ENCODE measurements at regions of chr16 and their contacts with region 1.

Region 1: DNA sequence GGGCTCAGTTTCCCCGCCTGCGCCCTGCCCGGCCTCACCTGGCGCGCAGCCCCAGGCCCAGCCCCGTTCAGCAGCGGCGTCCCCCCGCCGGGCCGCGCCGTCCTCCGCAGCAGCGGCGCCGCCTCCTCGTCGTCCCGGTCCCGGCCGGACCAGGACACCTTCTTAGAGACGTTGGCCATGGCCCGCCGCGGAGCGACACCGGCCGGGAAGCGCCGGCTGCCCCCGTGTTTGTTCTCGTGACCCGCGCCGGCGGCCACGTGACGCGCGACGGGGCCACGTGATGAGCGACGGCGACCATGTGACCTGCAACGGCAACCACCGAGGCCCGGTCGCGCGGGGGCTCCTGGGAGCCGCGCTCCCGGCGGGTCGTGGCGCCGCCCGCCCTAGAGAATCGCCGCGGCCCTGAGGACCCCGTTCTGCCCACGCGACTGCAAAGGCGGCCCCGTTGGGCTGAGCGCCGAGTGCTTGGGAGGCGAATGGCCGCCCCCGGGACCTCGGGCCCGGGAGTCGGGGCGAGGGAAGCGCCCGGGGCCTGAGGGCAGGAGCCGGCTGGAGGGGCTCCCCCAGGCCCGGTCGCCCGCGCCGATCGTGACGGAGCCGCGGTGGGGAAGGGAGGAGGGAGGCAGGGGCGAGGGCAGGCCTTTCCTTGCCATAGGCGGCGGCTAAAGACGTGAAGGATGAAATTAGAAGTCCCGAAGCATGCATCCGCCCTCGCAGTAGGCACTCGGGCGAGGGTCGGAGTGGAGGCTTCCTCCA is at the start of gene CLCN7:
- DNase-seq: peak; percentile 75 to 89 (median 84)
- H3K4me3 ChIP-seq: peak within 1 kb of the TSS; percentile 61 to 81 (median 77)
- H3K4me3 Mint-ChIP-seq: peak within 1 kb of the TSS; percentile 82 to 93
- H3K27ac ChIP-seq: peak within 1 kb of the TSS; percentile 79 to 99
- H3K27ac Mint-ChIP-seq: peak within 1 kb of the TSS; percentile 87 to 95 (median 91)
- H3K4me1 ChIP-seq: peaks cover 54 to 62% of the 10 kb centered on the region in 2 donors
- H3K4me1 Mint-ChIP-seq: peaks cover 47% of the 10 kb centered on the region
- H3K27me3 ChIP-seq: no peaks in the 10 kb centered on the region
- H3K27me3 Mint-ChIP-seq: peaks cover 0 to 5% (median 0%) of the 10 kb centered on the region in 3 donors
- CTCF ChIP-seq: no peak
- polyA plus RNA-seq, gene CLCN7: 37.4 to 249 (median 56.5) TPM

Region 2: DNA sequence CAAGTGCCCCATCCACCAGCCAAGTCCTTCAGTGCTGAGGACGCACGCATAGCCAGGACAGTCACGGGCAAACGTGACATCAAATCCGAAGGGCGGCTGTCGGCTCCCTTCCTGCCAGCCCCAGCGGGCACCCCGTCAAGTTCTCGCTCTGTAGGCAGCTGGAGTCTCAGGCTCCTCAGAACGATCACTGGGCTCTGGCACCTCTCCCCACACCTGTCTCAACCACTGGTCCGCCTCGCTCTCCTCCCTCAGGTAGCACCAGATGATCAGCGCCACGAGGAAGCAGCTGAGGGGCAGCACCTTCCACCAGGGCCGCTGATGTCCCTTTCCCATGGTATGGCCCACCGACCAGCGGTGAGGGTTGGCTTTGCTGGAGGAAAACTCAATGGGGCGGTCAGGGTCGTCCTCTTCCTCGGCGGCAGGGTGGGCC is 54.8 kb before region 1 on chr16:
- intact Hi-C with region 1: loop called in 1 of 2 experiments (anchors 1 kb)
- DNase-seq: no peak
- H3K4me3 ChIP-seq: peak overlapping the region; percentile 64 to 96 (median 69)
- H3K4me3 Mint-ChIP-seq: peak overlapping the region; percentile 86 to 93
- H3K27ac ChIP-seq: peak overlapping the region; percentile 72 to 87
- H3K27ac Mint-ChIP-seq: peak overlapping the region; percentile 72 to 96 (median 94)
- H3K4me1 ChIP-seq: peaks cover 18 to 21% of the 10 kb centered on the region in 2 donors
- H3K4me1 Mint-ChIP-seq: peaks cover 20% of the 10 kb centered on the region
- H3K27me3 ChIP-seq: no peaks in the 10 kb centered on the region
- H3K27me3 Mint-ChIP-seq: no peaks in the 10 kb centered on the region
- CTCF ChIP-seq: no peak

Region 3: GRCh38 chr16:1492923-1493745 is 18.2 kb after region 1 on chr16 and contains the start of gene TELO2:
- intact Hi-C with region 1: loop called in 1 of 2 experiments (anchors 2 kb)
- DNase-seq: peak; percentile 73 to 82 (median 81)
- H3K4me3 ChIP-seq: peak within 1 kb of the TSS; percentile 81 to 90 (median 87)
- H3K4me3 Mint-ChIP-seq: peak within 1 kb of the TSS; percentile 92 to 94
- H3K27ac ChIP-seq: peak within 1 kb of the TSS; percentile 78 to 96
- H3K27ac Mint-ChIP-seq: peak within 1 kb of the TSS; percentile 94 to 99 (median 98)
- H3K4me1 ChIP-seq: peaks cover 32 to 37% of the 10 kb centered on the region in 2 donors
- H3K4me1 Mint-ChIP-seq: peaks cover 29% of the 10 kb centered on the region
- H3K27me3 ChIP-seq: no peaks in the 10 kb centered on the region
- H3K27me3 Mint-ChIP-seq: peaks cover 0 to 2% (median 0%) of the 10 kb centered on the region in 3 donors
- CTCF ChIP-seq: no peak
- polyA plus RNA-seq, gene TELO2: 7.3 to 58.1 (median 11.4) TPM

Region 4: DNA sequence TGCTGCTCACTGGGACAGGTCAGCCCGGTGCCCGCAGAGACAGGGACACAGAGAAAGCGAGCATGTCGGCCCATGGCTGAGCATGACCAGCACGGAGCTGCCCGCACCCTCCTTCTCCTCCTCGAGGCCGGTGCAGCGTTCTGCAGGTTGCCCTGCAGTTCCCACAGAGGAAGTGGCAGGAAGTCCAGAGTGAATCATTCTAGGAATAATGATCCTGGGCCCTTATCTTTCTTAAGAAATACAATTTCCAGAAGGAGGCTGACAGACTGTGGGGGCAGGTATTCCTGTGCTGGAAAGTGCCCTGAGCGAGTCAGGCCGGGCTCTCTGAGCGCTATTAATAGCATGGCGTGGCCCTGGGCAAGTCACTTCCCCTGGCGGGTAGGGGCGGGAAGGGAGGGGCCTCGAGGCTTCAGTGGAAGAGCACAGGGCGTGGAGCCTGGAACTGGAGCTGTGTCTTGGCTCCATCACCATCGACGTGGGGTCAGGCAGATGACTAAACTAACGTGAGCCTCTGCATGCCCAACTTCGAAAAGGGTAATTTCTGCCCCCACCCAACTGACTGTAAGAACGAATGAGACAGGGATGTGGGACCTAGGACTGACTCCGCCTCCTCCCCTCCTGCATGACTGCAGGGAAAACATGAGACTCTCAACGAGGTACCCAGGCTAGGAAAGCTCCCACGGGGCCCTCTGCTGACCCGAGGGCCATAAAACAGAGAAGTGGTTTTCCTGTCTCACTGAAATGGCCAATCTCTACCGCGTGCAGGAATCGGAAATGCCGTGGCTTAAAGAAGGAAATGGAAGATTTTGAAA is 68.3 kb after region 1 on chr16:
- intact Hi-C with region 1: loop called in 1 of 2 experiments (anchors 5 kb)
- DNase-seq: peak; percentile 85 to 91 (median 85)
- H3K4me3 ChIP-seq: peak overlapping the region in 1 of 3 experiments; percentile 54
- H3K4me3 Mint-ChIP-seq: peak overlapping the region; percentile 40 to 79
- H3K27ac ChIP-seq: peak overlapping the region; percentile 85 to 89
- H3K27ac Mint-ChIP-seq: peak overlapping the region; percentile 90 to 98 (median 95)
- H3K4me1 ChIP-seq: peaks cover 38 to 44% of the 10 kb centered on the region in 2 donors
- H3K4me1 Mint-ChIP-seq: peaks cover 41% of the 10 kb centered on the region
- H3K27me3 ChIP-seq: no peaks in the 10 kb centered on the region
- H3K27me3 Mint-ChIP-seq: no peaks in the 10 kb centered on the region
- CTCF ChIP-seq: no peak